ENCODE measurements at regions of chr7 and their contacts with region 1.

Region 1: DNA sequence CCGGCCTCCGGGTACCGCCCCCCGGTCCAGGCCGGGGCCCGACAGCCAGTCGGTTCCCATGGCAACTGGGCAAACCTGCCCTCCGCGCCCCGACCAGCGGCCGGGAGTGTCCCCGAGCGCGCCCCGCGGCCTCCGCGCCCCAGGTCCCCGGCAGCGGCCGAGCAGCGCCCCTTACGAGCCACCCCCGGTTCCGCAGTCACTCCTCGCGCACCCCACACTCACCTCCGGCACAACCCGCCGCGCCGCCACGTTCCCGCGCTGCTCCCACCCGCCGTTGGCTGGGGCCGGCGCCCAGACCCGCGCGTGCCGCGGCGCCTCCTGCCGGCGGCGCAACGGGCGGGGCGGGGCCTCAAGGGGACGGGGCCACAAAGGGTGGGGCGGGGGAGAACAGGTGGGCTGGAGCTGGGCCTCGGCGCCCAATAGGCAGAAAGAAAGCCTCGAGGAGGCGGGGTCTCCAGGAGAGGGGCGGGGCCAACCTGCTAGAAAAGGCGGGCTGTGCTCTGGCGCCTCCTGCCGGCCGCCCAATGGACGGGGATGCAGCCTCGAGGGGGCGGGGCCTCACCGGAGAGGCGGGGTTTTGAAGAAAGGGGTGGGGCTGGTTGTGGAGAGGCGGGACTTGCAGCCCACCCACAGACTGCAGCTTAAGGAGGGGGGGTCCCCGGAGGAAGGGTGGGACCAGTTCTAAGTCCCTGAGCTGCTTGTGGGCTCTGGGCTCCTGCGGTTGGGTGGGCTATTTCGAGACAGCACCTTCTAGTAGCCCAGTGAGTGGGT is at the start of gene RADIL:
- DNase-seq: peak; percentile 96
- ATAC-seq: peak; percentile 96
- H3K4me3 ChIP-seq: peak within 1 kb of the TSS; percentile 60
- H3K27ac ChIP-seq: peak within 1 kb of the TSS; percentile 74
- H3K4me1 ChIP-seq: no peaks in the 10 kb centered on the region
- H3K27me3 ChIP-seq: no peaks in the 10 kb centered on the region
- CTCF ChIP-seq: peak; percentile 86
- total RNA-seq, gene RADIL: 7.3 TPM

Region 2: DNA sequence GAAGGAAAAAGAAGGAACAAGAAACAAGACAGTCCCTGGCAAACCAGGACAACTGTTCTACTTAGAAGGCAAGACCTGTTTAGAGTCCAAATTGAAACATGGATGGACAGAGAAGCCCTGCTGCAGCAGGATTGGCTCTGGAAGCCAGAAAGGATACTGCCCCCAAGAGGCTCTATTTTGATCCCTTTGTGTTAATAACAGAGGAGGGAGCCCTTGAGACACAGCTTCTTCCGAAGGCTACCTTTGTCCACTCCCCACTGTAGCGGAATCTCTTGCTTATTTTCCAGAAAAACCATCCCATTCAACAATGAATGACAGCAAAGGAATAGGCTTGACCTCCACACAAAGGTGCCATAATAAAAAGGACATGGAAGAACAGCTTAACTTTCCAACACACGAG is 321.8 kb before region 1 on chr7:
- intact Hi-C with region 1: no loop called
- DNase-seq: no peak
- ATAC-seq: no peak
- H3K4me3 ChIP-seq: no peak overlapping the region
- H3K27ac ChIP-seq: no peak overlapping the region
- H3K4me1 ChIP-seq: no peaks in the 10 kb centered on the region
- H3K27me3 ChIP-seq: peaks cover 9% of the 10 kb centered on the region
- CTCF ChIP-seq: no peak

Region 3: GRCh38 chr7:4830176-4830575 is 53.4 kb before region 1 on chr7:
- intact Hi-C with region 1: loop called (anchors 10 kb)
- DNase-seq: peak; percentile 84
- ATAC-seq: peak; percentile 95
- H3K4me3 ChIP-seq: no peak overlapping the region
- H3K27ac ChIP-seq: no peak overlapping the region
- H3K4me1 ChIP-seq: no peaks in the 10 kb centered on the region
- H3K27me3 ChIP-seq: no peaks in the 10 kb centered on the region
- CTCF ChIP-seq: peak; percentile 83

Measured in upper lobe of right lung (tissue), 1 donor.